ENCODE measurements at regions of chr6 and their contacts with region 1.

Region 1: DNA sequence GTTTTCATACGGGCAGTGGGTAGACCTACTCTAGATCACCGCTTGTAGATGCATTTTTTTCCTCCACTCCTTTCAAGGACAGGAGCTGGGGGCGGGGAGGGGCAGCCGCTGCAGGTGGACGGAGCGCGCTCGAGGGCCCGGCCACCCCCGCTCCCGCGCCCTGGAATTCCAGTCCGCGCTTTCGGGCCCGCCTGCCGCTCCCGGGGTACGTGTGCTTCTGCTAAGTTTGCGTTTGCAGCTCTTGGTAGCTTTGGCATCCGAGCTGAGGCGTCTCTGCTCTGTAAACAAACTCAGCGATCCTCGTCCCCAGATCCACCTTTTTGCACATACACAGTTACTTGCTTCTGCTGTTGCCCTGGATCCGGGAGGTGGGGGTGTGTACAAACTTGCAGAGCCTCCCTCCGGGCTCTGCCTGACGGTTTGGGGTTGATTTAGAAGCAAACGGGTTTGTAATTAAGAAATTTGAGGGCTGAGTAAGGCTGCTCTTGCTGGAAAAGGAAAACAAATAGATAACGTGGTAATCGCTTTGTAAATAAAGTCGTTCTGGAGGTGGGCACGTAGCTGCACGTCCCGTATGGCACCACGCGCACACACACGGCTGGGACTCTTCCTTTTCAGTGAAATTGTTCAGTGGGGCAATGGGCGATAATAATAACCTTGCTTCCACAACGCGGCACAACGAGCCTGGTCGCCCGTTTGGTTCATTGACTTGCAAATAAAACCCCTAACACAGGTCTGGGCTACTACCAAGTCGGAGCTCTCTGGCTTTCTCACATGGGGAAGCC is 976 bp upstream of the CITED2 start:
- DNase-seq: peak; percentile 93 to 94
- ATAC-seq: peak; percentile 90
- H3K4me3 ChIP-seq: peak overlapping the region; percentile 59 to 66
- H3K27ac ChIP-seq: peak overlapping the region; percentile 12 to 78
- H3K4me1 ChIP-seq: no peaks in the 10 kb centered on the region
- H3K27me3 ChIP-seq: no peaks in the 10 kb centered on the region

Region 2: DNA sequence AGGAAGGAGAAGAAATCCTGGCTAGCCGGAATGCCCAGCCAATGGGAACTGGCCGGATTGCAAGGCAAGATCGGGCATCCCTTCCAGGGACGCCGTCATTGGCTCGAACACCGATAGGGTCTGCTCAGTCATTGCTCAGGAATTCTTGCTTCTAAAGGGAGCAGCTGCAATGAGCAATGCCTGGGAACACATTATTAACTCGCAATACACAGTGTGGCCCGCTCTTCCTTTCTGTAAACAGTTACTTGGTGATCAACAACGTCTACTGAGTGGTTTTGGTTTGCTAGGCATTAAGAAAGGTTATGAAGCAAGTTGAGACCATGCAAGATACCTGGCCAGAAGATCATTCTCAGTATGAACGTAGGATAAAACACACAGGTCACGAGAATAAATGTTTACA is 164.4 kb after region 1 on chr6:
- intact Hi-C with region 1: loop called in 1 of 2 experiments (anchors 10 kb)
- DNase-seq: peak; percentile 85 to 91
- ATAC-seq: peak; percentile 82
- H3K4me3 ChIP-seq: no peak overlapping the region
- H3K27ac ChIP-seq: peak overlapping the region in 1 of 2 donors; percentile 94
- H3K4me1 ChIP-seq: peaks cover 4 to 6% of the 10 kb centered on the region in 2 donors
- H3K27me3 ChIP-seq: no peaks in the 10 kb centered on the region

Region 3: DNA sequence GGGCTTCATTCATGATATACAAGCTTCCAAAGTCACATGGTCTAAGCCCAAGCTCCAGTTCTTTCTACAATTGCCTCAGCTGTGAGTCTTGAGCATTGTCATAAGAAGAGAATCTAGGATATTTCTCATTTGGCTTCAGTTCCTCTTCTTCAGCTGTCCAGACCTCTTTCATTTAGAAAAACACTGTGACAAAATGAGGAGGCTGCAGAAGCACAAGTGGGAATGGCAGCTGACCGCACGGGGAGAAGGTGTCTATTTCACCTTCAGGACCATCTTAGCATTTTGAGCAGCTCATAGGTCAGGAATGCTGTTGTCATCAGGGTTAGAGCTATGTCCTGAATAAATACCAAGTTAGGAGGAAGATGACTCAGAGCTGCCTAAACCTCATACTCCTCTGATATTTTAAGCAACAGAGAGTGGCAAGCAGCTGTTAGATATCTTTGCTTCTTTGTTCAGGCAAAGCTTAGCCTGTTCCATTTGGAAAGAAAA is 389.1 kb after region 1 on chr6:
- intact Hi-C with region 1: loop called in 1 of 2 experiments (anchors 10 kb)
- DNase-seq: no peak
- ATAC-seq: peak; percentile 92
- H3K4me3 ChIP-seq: no peak overlapping the region
- H3K27ac ChIP-seq: peak overlapping the region in 1 of 2 donors; percentile 32
- H3K4me1 ChIP-seq: peaks cover 0 to 3% of the 10 kb centered on the region in 2 donors
- H3K27me3 ChIP-seq: no peaks in the 10 kb centered on the region

Region 4: DNA sequence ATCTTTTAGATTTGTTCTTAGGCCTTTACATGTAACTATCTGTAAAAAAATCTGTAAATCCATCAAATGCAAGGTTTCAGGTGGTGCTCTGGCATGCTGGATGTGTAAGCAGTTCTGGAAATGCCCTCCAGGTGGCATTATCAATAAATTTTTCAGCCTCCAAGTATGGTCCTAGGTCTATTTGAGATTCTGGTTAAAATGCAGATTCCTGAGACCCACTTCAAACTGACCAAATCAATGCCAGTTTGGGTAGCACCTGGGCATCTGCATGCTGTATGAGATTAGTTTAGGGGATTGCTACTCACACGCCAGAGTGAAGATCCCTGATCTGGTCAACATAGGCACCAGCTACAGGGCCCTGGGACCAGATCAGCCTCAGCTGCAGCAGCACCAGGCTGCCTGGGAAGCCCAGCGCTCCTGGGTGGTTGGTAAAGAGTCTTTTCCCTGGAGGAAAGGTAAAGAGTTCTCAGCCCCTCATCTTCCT is 506.3 kb after region 1 on chr6:
- intact Hi-C with region 1: loop called in 1 of 2 experiments (anchors 10 kb)
- DNase-seq: no peak
- ATAC-seq: peak; percentile 62
- H3K4me3 ChIP-seq: no peak overlapping the region
- H3K27ac ChIP-seq: peak overlapping the region in 1 of 2 donors; percentile 66
- H3K4me1 ChIP-seq: peaks cover 3 to 4% of the 10 kb centered on the region in 2 donors
- H3K27me3 ChIP-seq: no peaks in the 10 kb centered on the region

Region 5: DNA sequence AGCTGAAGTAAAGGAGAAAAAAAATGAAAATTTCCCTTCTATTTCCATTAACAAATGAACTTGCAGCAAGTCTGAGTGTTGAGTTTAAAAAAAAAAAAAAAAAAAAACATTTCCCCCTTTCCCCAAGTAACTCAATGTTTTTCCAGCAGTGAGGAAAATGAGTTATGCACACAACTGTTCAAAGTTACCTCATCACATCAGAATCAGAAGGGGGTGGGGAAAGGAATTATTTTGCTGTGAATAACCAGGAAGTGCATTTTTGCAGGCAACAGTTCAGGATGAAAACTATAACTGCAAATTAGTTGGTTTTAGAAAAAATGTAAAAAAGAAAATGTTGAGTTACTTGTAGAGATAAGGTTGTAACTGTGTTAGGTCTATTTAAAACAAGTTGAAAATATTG is 568.0 kb after region 1 on chr6:
- intact Hi-C with region 1: loop called in 1 of 2 experiments (anchors 2 kb)
- DNase-seq: no peak
- ATAC-seq: no peak
- H3K4me3 ChIP-seq: no peak overlapping the region
- H3K27ac ChIP-seq: no peak overlapping the region
- H3K4me1 ChIP-seq: peaks cover 1 to 7% of the 10 kb centered on the region in 2 donors
- H3K27me3 ChIP-seq: no peaks in the 10 kb centered on the region

Region 6: DNA sequence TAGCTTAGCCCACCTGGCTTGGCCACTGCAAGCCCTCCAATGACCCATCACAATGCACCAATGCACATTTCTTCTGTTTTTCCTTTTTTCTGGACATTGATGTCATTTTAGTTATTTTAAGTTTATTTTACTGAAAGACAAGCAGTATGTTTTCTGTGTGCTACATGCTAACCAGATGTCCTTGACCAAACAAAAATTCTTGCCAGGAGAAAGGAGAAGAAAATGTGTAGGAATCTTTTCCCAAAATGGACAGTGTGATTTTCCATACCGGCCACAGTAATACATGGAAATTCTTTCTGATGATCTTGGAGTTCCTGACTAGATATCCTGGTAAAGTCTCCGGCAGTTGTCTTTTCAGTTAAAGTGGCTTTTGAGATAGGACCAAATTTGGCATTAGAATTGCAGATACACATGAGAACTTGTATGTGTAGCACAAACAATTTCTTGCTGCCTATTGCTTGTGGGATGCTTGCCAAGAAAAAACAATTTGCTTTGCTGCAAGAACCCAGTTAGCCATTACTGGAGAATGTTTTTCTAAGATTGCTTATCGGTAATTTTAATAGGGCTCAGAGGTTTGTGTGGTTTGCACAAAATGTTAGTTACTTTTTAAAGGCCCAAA is 695.5 kb after region 1 on chr6:
- intact Hi-C with region 1: loop called in 1 of 2 experiments (anchors 5 kb)
- DNase-seq: no peak
- ATAC-seq: no peak
- H3K4me3 ChIP-seq: no peak overlapping the region
- H3K27ac ChIP-seq: no peak overlapping the region
- H3K4me1 ChIP-seq: peaks cover 2 to 9% of the 10 kb centered on the region in 2 donors
- H3K27me3 ChIP-seq: no peaks in the 10 kb centered on the region

Region 7: DNA sequence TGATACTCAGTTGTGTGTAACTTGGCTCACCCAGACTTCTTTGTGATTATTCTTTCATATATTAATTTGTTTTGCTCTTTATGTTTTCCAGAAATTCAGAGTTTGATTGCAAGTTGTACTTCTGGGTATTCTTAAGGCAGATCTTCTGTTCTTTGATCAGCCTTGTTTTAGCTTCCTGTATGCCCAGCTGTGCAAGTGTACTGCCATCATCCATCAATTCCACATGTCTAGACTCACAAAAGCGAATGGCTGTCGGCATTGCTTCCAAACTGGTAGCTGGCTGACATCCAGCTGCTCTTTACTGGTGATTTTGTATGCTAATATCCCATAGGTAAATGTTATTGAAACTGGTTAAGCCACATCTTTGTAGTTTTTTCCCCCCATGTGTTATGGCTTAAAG is 1083.8 kb after region 1 on chr6:
- intact Hi-C with region 1: loop called in 1 of 2 experiments (anchors 10 kb)
- DNase-seq: no peak
- ATAC-seq: no peak
- H3K4me3 ChIP-seq: no peak overlapping the region
- H3K27ac ChIP-seq: no peak overlapping the region
- H3K4me1 ChIP-seq: peaks cover 0 to 2% of the 10 kb centered on the region in 2 donors
- H3K27me3 ChIP-seq: no peaks in the 10 kb centered on the region

Measured in aorta (tissue), 5 donors.